ENCODE measurements at regions of chr18 and their contacts with region 1.

Region 1: GRCh38 chr18:12934454-12935071 is 13.2 kb upstream of the SEH1L start:
- DNase-seq: peak; percentile 81 to 84
- ATAC-seq: peak; percentile 74 to 96 (median 92)
- H3K4me3 ChIP-seq: no peak overlapping the region
- H3K27ac ChIP-seq: no peak overlapping the region
- H3K4me1 ChIP-seq: peaks cover 0 to 8% (median 0%) of the 10 kb centered on the region in 9 donors
- H3K27me3 ChIP-seq: no peaks in the 10 kb centered on the region
- CTCF ChIP-seq: peak; percentile 71 to 95 (median 93)

Region 2: DNA sequence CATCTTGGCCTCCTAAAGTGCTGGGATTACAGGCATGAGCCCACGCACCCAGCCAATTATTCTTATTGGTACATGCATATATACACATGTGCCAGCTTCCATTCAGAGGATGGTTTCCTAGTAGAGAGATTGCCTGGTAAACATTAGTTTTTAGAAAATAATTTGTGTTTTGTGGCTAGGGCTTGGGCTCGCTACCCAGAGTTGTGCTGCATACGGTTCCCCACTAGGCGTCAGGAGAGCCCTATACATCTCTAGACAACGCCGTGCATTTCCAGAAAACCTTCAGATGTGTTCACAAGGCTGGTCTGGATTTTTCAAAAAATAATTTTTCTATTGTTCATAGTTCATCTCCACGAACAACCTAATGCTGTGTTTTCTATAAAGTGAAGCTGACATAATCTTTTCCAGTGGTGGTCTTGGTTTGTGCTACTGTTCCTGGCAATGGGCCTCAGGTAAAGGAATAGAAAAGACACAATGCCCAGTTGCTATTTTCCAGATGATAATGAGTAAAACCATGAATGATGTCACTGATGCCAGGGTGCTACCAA is 542.9 kb before region 1 on chr18:
- intact Hi-C with region 1: loop called in 1 of 10 experiments (anchors 10 kb)
- DNase-seq: peak; percentile 29 to 58
- ATAC-seq: peak; percentile 77 to 95 (median 93)
- H3K4me3 ChIP-seq: no peak overlapping the region
- H3K27ac ChIP-seq: no peak overlapping the region
- H3K4me1 ChIP-seq: peaks cover 0 to 3% (median 0%) of the 10 kb centered on the region in 9 donors
- H3K27me3 ChIP-seq: no peaks in the 10 kb centered on the region
- CTCF ChIP-seq: peak; percentile 78 to 95 (median 91)

Region 3: GRCh38 chr18:12726774-12727550 is 207.6 kb before region 1 on chr18:
- intact Hi-C with region 1: loop called (anchors 1 to 5 kb)
- DNase-seq: peak in 1 of 2 donors; percentile 56
- ATAC-seq: peak in 6 of 8 donors; percentile 26 to 56 (median 40)
- H3K4me3 ChIP-seq: no peak overlapping the region
- H3K27ac ChIP-seq: no peak overlapping the region
- H3K4me1 ChIP-seq: no peaks in the 10 kb centered on the region
- H3K27me3 ChIP-seq: no peaks in the 10 kb centered on the region
- CTCF ChIP-seq: peak; percentile 69 to 92 (median 89)

Region 4: DNA sequence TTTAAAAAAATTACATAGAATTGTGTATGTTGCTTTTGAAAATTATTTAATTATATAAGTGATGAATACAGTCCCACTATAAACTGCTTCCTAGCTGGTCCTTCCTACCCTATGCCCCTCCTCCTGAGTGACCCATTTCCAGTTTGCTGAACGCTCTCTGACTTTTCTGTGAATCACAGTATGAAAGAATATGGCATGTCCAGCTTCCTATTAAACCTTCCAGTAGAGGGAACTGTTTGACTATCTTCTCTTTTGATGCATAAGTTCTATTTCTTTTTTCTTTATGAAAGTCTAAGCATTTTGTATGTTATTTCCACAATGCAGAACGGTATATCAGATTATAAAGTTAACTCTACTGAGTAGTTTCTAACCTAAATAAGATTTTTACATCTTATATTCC is 190.5 kb before region 1 on chr18:
- intact Hi-C with region 1: loop called (anchors 1 to 5 kb)
- DNase-seq: no peak
- ATAC-seq: peak in 3 of 8 donors; percentile 31 to 56 (median 42)
- H3K4me3 ChIP-seq: no peak overlapping the region
- H3K27ac ChIP-seq: no peak overlapping the region
- H3K4me1 ChIP-seq: no peaks in the 10 kb centered on the region
- H3K27me3 ChIP-seq: no peaks in the 10 kb centered on the region
- CTCF ChIP-seq: peak; percentile 12 to 72 (median 61)

Region 5: DNA sequence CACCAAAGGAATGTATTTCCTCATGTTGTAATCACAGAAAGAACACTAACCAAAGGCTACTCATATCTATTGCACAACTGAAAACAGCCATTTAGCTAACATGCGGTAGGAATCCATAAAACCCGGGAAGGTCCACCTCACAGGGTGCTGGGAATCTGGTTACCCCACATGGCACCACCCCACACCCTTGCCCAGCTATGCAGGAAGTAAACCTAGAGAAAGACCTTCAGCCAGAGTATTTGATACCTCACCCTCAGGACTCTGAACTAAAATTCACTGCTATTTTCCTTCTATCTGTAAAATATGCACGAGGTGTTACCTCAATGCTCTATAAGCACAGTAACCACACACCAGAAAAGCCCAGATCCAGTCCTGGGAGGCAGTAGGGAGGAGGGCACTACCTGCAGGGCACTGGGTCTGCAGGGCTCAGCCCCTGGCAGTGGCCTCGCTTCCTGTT is 96.4 kb before region 1 on chr18:
- intact Hi-C with region 1: no loop called
- DNase-seq: no peak
- ATAC-seq: peak in 6 of 8 donors; percentile 27 to 94 (median 60)
- H3K4me3 ChIP-seq: peak overlapping the region in 1 of 10 donors; percentile 15
- H3K27ac ChIP-seq: peak overlapping the region in 6 of 10 donors; percentile 12 to 88 (median 32)
- H3K4me1 ChIP-seq: peaks cover 0 to 57% (median 7%) of the 10 kb centered on the region in 9 donors
- H3K27me3 ChIP-seq: no peaks in the 10 kb centered on the region
- CTCF ChIP-seq: no peak

Region 6: GRCh38 chr18:12862467-12862866 is 72.1 kb before region 1 on chr18:
- intact Hi-C with region 1: no loop called
- DNase-seq: no peak
- ATAC-seq: no peak
- H3K4me3 ChIP-seq: no peak overlapping the region
- H3K27ac ChIP-seq: no peak overlapping the region
- H3K4me1 ChIP-seq: peaks cover 0 to 39% (median 9%) of the 10 kb centered on the region in 9 donors
- H3K27me3 ChIP-seq: no peaks in the 10 kb centered on the region
- CTCF ChIP-seq: no peak

Region 7: DNA sequence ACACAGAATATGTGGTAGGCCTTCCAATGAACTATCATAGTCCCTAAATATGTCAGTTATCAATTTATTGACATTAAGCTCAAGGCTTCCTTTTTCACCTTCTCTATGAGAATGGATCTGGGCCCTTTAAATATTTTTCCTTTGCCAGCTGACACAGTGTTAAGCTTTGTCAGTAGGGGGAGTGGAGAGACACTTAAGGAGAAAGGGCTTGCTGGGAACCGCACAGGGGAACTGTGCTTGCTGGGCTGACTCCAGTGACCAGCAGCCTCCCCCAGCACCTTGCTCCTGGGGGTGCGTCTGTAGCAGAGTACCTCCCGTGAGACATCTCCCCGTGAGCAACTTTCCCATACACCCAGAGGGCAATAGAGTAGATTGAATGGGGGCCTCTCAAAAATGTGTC is 44.1 kb before region 1 on chr18:
- intact Hi-C with region 1: loop called in 3 of 10 experiments (anchors 5 kb)
- DNase-seq: no peak
- ATAC-seq: no peak
- H3K4me3 ChIP-seq: no peak overlapping the region
- H3K27ac ChIP-seq: no peak overlapping the region
- H3K4me1 ChIP-seq: peaks cover 0 to 4% (median 0%) of the 10 kb centered on the region in 9 donors
- H3K27me3 ChIP-seq: peaks cover 0 to 26% (median 5%) of the 10 kb centered on the region in 7 donors
- CTCF ChIP-seq: peak in 1 of 9 donors; percentile 23

Region 8: DNA sequence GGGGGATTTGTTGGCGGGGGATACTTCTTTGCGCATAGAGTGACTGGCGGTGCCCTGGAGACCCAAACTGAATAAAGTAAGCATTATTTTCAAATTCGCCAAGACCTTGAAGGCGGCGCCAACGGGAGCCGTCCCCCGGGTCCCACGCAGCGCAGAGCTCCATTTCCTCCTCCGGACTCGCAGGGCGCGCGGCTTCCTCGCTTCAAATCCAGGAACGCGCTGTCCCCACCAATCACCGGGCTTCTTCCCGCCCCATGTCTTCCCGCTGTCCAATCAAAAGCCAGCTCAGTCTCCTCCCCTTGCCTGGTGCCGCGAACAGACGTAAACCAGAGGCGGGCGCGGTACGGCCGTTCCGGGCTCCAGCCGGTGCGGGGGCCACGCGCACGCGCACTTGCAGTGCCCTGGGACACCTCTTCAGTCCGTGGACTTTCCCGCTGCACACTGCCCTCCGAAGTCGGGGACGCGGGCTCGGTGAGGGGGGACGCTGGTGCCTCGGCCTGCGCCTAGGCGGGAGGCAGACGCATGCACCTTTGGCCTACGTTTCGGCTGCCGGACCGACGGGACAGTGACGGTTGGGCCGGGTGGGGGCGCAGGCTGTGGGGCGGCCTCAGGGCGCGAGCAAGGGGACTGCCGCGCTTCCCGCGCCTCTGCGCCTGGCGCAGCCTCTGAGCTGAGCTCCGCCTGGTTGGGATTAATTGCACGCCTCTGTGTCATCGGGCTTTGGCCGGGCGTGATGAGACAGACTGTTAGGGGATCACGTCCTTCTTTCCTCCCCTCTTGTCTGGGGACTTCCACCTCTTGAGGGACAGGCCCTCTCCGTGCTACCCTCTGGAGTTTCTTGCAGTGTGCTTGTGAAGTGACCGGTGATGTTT is 56.6 kb after region 1 on chr18 and contains the start of gene CEP192:
- intact Hi-C with region 1: no loop called
- DNase-seq: peak; percentile 97 to 98
- ATAC-seq: peak; percentile 98 to 100 (median 99)
- H3K4me3 ChIP-seq: peak within 1 kb of the TSS; percentile 49 to 93 (median 78)
- H3K27ac ChIP-seq: peak within 1 kb of the TSS; percentile 54 to 92 (median 87)
- H3K4me1 ChIP-seq: peaks cover 6 to 35% (median 24%) of the 10 kb centered on the region in 9 donors
- H3K27me3 ChIP-seq: no peaks in the 10 kb centered on the region
- CTCF ChIP-seq: peak in 3 of 9 donors; percentile 9 to 13 (median 13)
- total RNA-seq, gene CEP192: 18.3 to 35.6 (median 32.4) TPM

Region 9: GRCh38 chr18:13191779-13192178 is 257.2 kb after region 1 on chr18:
- intact Hi-C with region 1: no loop called
- DNase-seq: no peak
- ATAC-seq: peak in 7 of 8 donors; percentile 29 to 72 (median 37)
- H3K4me3 ChIP-seq: no peak overlapping the region
- H3K27ac ChIP-seq: peak overlapping the region in 1 of 10 donors; percentile 0
- H3K4me1 ChIP-seq: peaks cover 0 to 7% (median 0%) of the 10 kb centered on the region in 9 donors
- H3K27me3 ChIP-seq: no peaks in the 10 kb centered on the region
- CTCF ChIP-seq: no peak

Measured in heart right ventricle (tissue), 16 donors.